CD4-positive, alpha-beta T cell (primary cell): ENCODE measurements at regions of chr19 and their contacts with region 1.

Region 1: GRCh38 chr19:36850559-36851442 is at the start of gene ZNF345:
- DNase-seq: peak; percentile 69 to 94 (median 79)
- ATAC-seq: peak; percentile 81
- H3K4me3 ChIP-seq: peak within 1 kb of the TSS; percentile 83
- H3K4me3 Mint-ChIP-seq: no peak within 1 kb of the TSS
- H3K27ac ChIP-seq: peak within 1 kb of the TSS; percentile 71 to 86
- H3K27ac Mint-ChIP-seq: no peak within 1 kb of the TSS
- H3K4me1 ChIP-seq: peaks cover 29% of the 10 kb centered on the region
- H3K4me1 Mint-ChIP-seq: peaks cover 15% of the 10 kb centered on the region
- H3K27me3 ChIP-seq: no peaks in the 10 kb centered on the region
- H3K27me3 Mint-ChIP-seq: no peaks in the 10 kb centered on the region
- CTCF ChIP-seq: no peak
- total RNA-seq, gene ZNF345: 5.9 to 7.1 TPM

Region 2: DNA sequence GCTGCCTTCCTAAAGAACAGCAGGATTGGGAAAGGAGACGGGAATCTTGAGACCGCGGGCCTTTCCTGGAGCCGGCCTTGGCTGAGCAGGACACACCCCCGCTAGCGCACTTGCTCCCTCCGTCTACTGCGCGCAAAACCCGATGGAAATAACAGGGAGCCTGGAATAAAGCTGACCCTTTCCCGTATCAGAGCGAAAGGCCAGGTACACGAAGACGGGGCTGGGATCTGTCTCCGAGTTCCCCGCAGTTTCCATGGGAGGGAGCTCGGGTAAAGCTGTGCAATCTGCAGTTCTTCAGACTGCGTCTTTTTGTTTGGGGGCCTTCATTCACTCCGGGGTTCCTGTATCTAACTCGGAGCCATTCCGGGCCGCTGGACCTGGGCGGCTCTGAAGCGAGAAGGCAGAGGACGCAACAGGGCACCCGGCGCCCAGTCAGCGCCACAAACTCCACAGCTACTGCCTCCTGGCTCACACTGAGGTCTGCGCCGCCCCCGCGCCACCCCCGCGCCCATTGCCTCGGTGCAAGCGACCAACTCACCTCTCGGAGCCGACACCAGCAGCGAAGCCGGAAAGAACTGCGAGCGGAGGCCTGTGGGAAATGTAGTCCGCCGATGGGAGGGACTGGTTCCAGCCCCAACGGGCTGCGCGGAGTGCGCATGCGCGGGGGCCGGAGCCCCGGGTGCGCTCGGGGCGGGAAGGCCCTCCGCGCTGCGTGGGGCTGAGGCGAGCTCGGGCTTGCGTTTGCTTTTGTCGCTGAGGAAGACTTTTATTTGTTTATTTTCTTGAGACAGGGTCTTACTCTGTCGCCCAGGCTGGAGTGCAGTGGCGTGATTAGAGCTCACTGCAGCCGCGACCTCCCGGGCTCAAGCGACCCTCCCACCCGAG is 471.9 kb before region 1 on chr19 and contains the start of gene ZFP14:
- CTCF ChIA-PET with region 1: interaction called, 7 read pairs
- POLR2A ChIA-PET with region 1: interaction called, 5 read pairs
- intact Hi-C with region 1: loop called in 1 of 2 experiments (anchors 2 kb)
- DNase-seq: peak; percentile 89 to 97 (median 93)
- ATAC-seq: peak; percentile 97
- H3K4me3 ChIP-seq: peak within 1 kb of the TSS; percentile 77
- H3K4me3 Mint-ChIP-seq: peak within 1 kb of the TSS; percentile 98
- H3K27ac ChIP-seq: peak within 1 kb of the TSS; percentile 74 to 84
- H3K27ac Mint-ChIP-seq: peak within 1 kb of the TSS; percentile 99
- H3K4me1 ChIP-seq: peaks cover 18% of the 10 kb centered on the region
- H3K4me1 Mint-ChIP-seq: peaks cover 21% of the 10 kb centered on the region
- H3K27me3 ChIP-seq: no peaks in the 10 kb centered on the region
- H3K27me3 Mint-ChIP-seq: no peaks in the 10 kb centered on the region
- CTCF ChIP-seq: peak; percentile 39
- total RNA-seq, gene ZFP14: 3.7 to 4.4 TPM

Region 3: GRCh38 chr19:36605101-36605876 is 245.5 kb before region 1 on chr19 and contains the start of gene ZNF382:
- CTCF ChIA-PET with region 1: no interaction called
- POLR2A ChIA-PET with region 1: interaction called, 18 read pairs
- intact Hi-C with region 1: no loop called
- DNase-seq: peak; percentile 74 to 92 (median 85)
- ATAC-seq: peak; percentile 75
- H3K4me3 ChIP-seq: peak within 1 kb of the TSS; percentile 87
- H3K4me3 Mint-ChIP-seq: peak within 1 kb of the TSS; percentile 85
- H3K27ac ChIP-seq: peak within 1 kb of the TSS; percentile 92 to 95
- H3K27ac Mint-ChIP-seq: peak within 1 kb of the TSS; percentile 83
- H3K4me1 ChIP-seq: peaks cover 10% of the 10 kb centered on the region
- H3K4me1 Mint-ChIP-seq: peaks cover 28% of the 10 kb centered on the region
- H3K27me3 ChIP-seq: no peaks in the 10 kb centered on the region
- H3K27me3 Mint-ChIP-seq: no peaks in the 10 kb centered on the region
- CTCF ChIP-seq: no peak
- total RNA-seq, gene ZNF382: 4.2 to 4.4 TPM

Region 4: DNA sequence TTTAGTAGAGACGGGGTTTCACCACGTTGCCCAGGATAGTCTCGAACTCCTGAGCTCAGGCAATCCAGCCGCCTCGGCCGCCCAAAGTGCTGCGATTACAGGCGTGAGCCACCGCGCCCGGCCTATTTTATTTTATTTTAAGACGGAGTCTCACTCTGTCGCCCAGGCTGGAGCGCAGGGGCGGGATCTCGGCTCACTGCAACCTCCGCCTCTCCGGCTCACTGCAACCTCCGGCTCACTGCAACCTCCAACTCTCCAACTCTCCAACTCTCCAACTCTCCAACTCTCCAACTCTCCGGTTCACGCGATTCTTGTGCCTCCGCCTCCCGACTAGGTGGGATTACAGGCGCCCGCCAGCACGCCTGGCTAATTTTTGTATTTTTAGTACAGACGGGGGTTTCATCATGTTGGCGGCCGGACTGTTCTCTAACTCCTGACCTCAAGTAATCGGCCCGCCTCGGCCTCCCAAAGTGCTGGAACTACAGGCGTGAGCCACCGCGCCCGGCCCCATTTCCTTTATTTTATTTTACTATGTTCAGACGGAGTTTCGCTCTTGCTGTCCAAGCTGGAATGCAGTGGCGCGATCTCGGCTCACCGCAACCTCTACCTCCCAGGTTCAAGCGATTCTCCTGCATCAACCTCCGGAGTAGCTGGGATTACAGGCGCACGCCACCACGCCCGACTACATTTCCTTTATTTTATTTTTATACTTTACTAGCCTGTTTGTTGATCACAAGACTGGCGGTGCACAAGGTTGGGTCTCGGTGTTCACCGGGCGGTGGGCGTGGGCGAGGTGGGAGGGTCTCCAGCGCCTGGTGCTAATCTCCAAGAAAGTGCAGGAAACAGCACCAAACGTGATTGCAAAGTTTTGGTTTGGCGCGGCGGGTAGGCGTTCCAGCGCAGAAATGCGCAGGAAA is 54.5 kb before region 1 on chr19:
- CTCF ChIA-PET with region 1: interaction called, 3 read pairs
- POLR2A ChIA-PET with region 1: interaction called, 16 read pairs
- intact Hi-C with region 1: loop called in 1 of 2 experiments (anchors 1 kb)
- DNase-seq: peak in 1 of 14 experiments; percentile 7
- ATAC-seq: no peak
- H3K4me3 ChIP-seq: peak overlapping the region; percentile 76
- H3K4me3 Mint-ChIP-seq: peak overlapping the region; percentile 100
- H3K27ac ChIP-seq: peak overlapping the region; percentile 63 to 67
- H3K27ac Mint-ChIP-seq: peak overlapping the region; percentile 99
- H3K4me1 ChIP-seq: peaks cover 14% of the 10 kb centered on the region
- H3K4me1 Mint-ChIP-seq: peaks cover 26% of the 10 kb centered on the region
- H3K27me3 ChIP-seq: no peaks in the 10 kb centered on the region
- H3K27me3 Mint-ChIP-seq: peaks cover 9% of the 10 kb centered on the region
- CTCF ChIP-seq: no peak

Region 5: GRCh38 chr19:37077934-37078725 is 227.3 kb after region 1 on chr19 and contains the start of gene ZNF420:
- CTCF ChIA-PET with region 1: interaction called, 3 read pairs
- POLR2A ChIA-PET with region 1: interaction called, 13 read pairs
- intact Hi-C with region 1: loop called in 1 of 2 experiments (anchors 5 kb)
- DNase-seq: peak; percentile 75 to 95 (median 84)
- ATAC-seq: peak; percentile 95
- H3K4me3 ChIP-seq: peak within 1 kb of the TSS; percentile 99
- H3K4me3 Mint-ChIP-seq: peak within 1 kb of the TSS; percentile 98
- H3K27ac ChIP-seq: peak within 1 kb of the TSS; percentile 65 to 72
- H3K27ac Mint-ChIP-seq: peak within 1 kb of the TSS; percentile 91
- H3K4me1 ChIP-seq: peaks cover 25% of the 10 kb centered on the region
- H3K4me1 Mint-ChIP-seq: peaks cover 30% of the 10 kb centered on the region
- H3K27me3 ChIP-seq: no peaks in the 10 kb centered on the region
- H3K27me3 Mint-ChIP-seq: no peaks in the 10 kb centered on the region
- CTCF ChIP-seq: no peak
- total RNA-seq, gene ZNF420: 3.7 to 4.5 TPM

Region 6: DNA sequence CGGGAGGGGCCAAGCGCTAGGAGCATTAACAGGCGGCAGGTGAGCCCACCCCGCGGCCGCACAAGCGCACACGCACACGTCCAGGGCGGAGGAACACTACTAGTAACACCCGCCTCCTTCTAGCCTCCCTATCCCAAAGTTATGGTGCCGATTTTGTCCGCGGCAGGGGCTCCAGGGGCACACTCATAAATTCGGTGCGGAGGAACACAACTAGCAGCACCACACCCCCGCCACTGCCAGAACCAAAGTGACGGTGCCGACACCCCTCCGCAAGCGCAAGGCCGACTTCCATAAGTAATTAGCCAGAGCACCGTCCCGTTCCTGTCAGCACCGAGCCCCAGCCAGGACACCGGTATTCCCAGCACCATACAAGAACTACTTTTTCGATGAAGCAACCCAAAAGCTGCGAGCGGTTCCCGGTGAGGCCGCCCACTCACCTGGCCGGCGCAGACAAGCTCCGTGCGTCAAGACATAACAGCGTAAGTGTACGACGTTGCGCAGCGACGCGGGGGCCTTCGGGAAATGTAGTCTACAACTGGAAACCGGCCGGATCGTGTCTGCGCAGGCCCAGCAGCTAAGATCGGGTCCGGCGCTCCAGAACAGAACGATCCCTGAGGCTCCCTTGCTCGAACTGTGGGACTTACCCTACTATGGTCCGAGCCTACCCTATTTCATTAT is 743.6 kb after region 1 on chr19 and contains the starts of genes ZNF540 and ZNF571:
- CTCF ChIA-PET with region 1: no interaction called
- POLR2A ChIA-PET with region 1: interaction called, 12 read pairs
- intact Hi-C with region 1: no loop called
- DNase-seq: peak; percentile 86 to 96 (median 91)
- ATAC-seq: peak; percentile 95
- H3K4me3 ChIP-seq: peak within 1 kb of the TSS; percentile 93
- H3K4me3 Mint-ChIP-seq: peak within 1 kb of the TSS; percentile 97
- H3K27ac ChIP-seq: peak within 1 kb of the TSS; percentile 94 to 97
- H3K27ac Mint-ChIP-seq: peak within 1 kb of the TSS; percentile 98
- H3K4me1 ChIP-seq: peaks cover 15% of the 10 kb centered on the region
- H3K4me1 Mint-ChIP-seq: peaks cover 39% of the 10 kb centered on the region
- H3K27me3 ChIP-seq: no peaks in the 10 kb centered on the region
- H3K27me3 Mint-ChIP-seq: no peaks in the 10 kb centered on the region
- CTCF ChIP-seq: no peak
- total RNA-seq, gene ZNF540: 11.6 to 12.0 TPM
- total RNA-seq, gene ZNF571: 6.7 to 7.0 TPM